Endothelial cell of umbilical vein (primary cell): ENCODE measurements at regions of chr1 and their contacts with region 1.

Region 1: DNA sequence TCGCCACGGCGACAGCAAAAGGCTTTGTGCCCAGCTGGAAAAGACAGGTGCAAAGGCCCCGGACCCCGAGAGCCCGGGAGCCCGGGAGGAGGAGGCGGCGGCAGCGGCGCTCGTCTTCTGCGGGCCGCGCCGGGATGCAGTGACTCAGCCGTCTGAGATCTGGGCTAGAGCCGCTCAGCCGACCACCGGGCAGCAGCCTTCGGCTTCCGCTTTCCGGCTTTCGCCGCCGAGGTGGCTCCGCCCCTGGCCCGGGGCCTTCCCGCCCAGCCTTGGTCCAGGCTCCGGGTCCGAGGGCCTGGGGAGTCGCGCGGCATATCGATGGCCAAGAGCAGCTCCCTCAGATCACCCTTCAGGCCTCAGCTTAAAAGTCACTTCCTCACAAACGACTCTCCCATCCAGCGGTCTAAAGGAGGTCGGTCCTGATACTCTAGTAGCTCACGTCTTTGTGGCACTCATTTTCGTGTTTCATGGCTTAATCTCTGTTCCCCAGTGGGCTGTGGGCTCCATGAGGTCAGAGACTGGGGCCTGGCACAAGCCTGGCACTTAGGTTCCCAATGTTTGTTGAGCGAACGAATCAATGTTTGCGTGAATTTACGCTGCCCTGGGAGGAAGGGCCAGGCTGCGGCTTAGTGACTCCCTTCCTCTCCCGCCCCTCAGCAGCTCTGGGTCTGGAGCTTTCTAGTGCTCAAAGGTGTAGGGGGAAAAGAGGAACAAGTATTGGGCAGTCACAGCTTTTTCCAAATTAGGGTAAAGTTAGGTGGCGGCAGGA is at the start of gene PHTF1:
- DNase-seq: peak; percentile 82
- H3K4me3 ChIP-seq: peak within 1 kb of the TSS; percentile 83 to 100 (median 96)
- H3K27ac ChIP-seq: peak within 1 kb of the TSS; percentile 92
- H3K4me1 ChIP-seq: peaks cover 22% of the 10 kb centered on the region
- H3K27me3 ChIP-seq: no peaks in the 10 kb centered on the region
- CTCF ChIP-seq: no peak
- POLR2A ChIP-seq: peak; percentile 98
- total RNA-seq, gene PHTF1: 62.6 and 68.7 TPM in 2 replicates

Region 2: DNA sequence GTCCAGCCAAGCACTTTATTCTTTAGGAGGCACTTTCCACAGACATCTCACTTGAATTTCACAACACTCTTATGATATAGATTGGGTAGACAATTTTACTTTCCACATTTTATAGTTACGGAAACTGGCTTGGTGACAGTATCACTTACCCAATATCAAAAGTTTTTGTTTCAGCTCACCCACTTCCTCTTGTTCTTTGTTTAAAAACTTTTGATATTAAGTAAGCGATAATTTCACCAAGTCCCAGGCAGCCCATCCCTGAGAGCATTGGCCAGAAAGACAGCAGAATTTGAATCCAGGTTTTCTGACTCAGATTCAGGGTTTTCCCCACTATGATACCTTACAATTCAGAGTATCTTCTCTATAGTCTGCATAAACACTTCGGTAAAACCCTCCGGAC is 626.5 kb before region 1 on chr1:
- CTCF ChIA-PET with region 1: no interaction called
- POLR2A ChIA-PET with region 1: interaction called, 12 read pairs
- dilution Hi-C with region 1: no loop called
- intact Hi-C with region 1: no loop called
- DNase-seq: no peak
- H3K4me3 ChIP-seq: no peak overlapping the region
- H3K27ac ChIP-seq: no peak overlapping the region
- H3K4me1 ChIP-seq: peaks cover 10% of the 10 kb centered on the region
- H3K27me3 ChIP-seq: no peaks in the 10 kb centered on the region
- CTCF ChIP-seq: no peak
- POLR2A ChIP-seq: no peak

Region 3: DNA sequence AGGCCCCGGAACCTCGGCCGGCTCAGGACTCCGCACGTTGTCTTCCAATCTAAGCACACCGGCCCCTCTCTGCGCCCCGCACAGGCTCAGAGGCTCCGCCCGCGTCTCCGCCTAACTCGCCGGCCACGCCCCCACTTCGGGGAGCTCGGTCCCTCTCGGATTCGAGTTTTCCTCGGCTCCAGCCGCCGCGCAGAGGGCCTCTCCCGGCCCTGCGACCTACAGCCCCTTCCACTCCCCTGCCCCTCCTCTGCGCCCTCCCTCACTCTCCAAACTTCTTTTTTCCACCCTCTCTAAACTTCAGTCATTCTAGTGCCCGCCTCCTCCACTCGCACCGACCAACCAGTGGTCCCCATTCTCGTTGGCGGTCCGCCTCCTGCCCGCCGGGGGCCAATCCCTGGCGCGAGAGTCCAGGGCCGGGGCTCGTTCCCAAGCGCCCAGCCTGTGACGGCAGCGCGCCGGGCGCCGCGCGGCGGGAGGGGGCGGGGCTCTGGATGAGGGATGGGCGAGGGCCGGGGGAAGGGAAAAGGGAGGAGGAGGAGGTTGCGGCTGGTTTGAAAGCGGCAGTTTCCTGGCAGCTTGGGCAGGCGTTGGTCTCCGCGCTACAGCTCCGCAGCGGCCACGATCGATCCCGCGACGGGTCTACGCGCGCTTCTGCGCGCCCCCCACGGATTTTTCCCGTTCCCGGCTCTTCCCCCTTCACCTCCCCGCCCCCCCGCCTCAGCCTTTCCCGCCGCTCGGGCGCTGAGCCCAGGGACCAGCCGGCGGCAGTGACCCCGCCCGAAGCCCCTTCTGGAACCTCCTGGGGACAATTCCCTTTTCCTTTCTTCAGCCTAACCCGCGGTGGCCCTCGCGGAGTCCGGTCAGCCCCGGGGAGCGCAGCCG is 369.3 kb before region 1 on chr1 and contains the start of gene MAGI3:
- CTCF ChIA-PET with region 1: no interaction called
- POLR2A ChIA-PET with region 1: no interaction called
- dilution Hi-C with region 1: no loop called
- intact Hi-C with region 1: loop called (anchors 2 kb)
- DNase-seq: peak; percentile 99
- H3K4me3 ChIP-seq: peak within 1 kb of the TSS; percentile 72 to 89 (median 88)
- H3K27ac ChIP-seq: peak within 1 kb of the TSS; percentile 75
- H3K4me1 ChIP-seq: peaks cover 14% of the 10 kb centered on the region
- H3K27me3 ChIP-seq: no peaks in the 10 kb centered on the region
- CTCF ChIP-seq: no peak
- POLR2A ChIP-seq: peak; percentile 42
- total RNA-seq, gene MAGI3: 13.9 and 16.1 TPM in 2 replicates

Region 4: DNA sequence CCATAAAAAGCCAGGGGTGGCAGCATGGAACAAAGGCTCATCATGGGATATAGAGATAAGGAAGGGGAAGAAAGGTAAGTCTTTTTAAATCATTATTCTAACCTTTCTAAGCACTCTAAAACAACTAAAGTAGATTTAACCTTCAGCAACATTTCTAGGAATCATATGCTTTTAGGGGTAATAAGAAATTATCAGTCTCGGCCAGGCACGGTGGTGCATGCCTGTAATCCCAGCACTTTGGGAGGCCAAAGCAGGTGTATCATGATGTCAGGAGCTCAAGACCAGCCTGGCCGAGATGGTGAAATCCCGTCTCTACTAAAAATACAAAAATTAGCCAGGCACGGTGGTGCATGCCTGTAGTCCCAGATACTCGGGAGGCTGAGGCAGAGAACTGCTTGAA is 20.0 kb after region 1 on chr1:
- CTCF ChIA-PET with region 1: no interaction called
- POLR2A ChIA-PET with region 1: no interaction called
- dilution Hi-C with region 1: no loop called
- intact Hi-C with region 1: no loop called
- DNase-seq: no peak
- H3K4me3 ChIP-seq: no peak overlapping the region
- H3K27ac ChIP-seq: no peak overlapping the region
- H3K4me1 ChIP-seq: peaks cover 7% of the 10 kb centered on the region
- H3K27me3 ChIP-seq: no peaks in the 10 kb centered on the region
- CTCF ChIP-seq: no peak
- POLR2A ChIP-seq: no peak

Region 5: GRCh38 chr1:113904674-113905434 is 145.3 kb after region 1 on chr1 and contains the starts of genes AP4B1 and DCLRE1B:
- CTCF ChIA-PET with region 1: interaction called, 4 read pairs
- POLR2A ChIA-PET with region 1: interaction called, 3 read pairs
- dilution Hi-C with region 1: no loop called
- intact Hi-C with region 1: loop called (anchors 1 kb)
- DNase-seq: peak; percentile 100
- H3K4me3 ChIP-seq: peak within 1 kb of the TSS; percentile 55 to 86 (median 60)
- H3K27ac ChIP-seq: peak within 1 kb of the TSS; percentile 72
- H3K4me1 ChIP-seq: peaks cover 12% of the 10 kb centered on the region
- H3K27me3 ChIP-seq: no peaks in the 10 kb centered on the region
- CTCF ChIP-seq: peak; percentile 60 to 73
- POLR2A ChIP-seq: peak; percentile 96
- total RNA-seq, gene AP4B1: 29.4 and 33.0 TPM in 2 replicates
- total RNA-seq, gene DCLRE1B: 10.7 and 10.8 TPM in 2 replicates

Region 6: DNA sequence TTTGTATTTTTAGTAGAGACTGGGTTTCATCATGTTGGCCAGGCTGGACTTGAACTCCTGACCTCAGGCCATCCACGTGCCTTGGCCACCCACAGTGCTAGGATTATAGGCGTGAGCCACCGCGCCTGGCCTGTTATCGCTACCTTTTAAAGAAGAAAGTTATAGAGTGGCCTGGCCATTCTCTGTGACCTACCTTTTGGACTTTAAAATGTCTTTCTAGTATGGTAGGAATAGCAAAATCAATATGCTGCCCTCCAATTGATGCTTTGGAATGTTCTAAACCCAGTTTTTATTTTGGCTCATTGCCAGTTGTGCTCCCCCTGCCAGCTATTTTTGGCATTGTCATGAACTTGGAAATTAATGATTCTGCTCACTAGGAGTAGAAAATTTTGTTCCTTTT is 189.5 kb after region 1 on chr1:
- CTCF ChIA-PET with region 1: interaction called, 3 read pairs
- POLR2A ChIA-PET with region 1: no interaction called
- dilution Hi-C with region 1: no loop called
- intact Hi-C with region 1: loop called (anchors 5 kb)
- DNase-seq: peak; percentile 28
- H3K4me3 ChIP-seq: no peak overlapping the region
- H3K27ac ChIP-seq: no peak overlapping the region
- H3K4me1 ChIP-seq: peaks cover 25% of the 10 kb centered on the region
- H3K27me3 ChIP-seq: no peaks in the 10 kb centered on the region
- CTCF ChIP-seq: peak; percentile 10 to 26
- POLR2A ChIP-seq: no peak